Lower leg skin (tissue), 4 donors: ENCODE measurements at regions of chr12 and their contacts with region 1.

Region 1: DNA sequence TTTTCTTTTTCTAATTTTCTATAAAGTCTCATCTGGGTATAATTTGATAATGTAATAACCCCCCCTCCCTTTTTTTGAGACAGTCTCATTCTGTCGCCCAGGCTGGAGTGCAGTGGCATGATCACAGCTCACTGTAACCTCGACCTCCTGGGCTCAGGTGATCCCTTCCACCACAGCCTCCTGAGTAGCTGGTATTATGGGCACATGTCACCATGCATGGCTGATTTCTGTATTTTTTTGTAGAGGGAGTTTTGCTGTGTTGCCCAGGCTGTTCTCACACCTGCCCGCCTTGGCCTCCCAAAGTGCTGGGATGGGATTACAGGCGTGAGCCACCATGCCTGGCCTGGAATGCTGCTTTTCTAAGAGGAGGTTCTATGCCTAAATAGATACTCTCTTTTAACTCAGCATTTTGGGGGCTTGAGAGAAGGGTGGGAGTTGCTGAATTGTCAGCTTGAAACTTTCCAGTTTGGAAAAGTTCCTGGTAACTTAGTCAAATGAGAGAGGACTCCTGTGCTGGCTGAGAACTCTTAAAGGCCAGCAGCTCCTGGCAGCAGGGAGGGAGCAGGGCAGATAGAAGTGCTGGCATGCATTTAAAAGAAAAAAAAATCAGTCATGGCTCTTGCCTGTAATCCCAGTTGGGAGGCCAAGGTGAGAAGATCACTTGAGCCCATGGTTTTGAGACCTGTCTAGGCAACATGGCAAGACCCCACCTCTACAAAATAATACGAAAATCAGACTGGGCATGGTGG is 13.0 kb downstream of the NUDT4 start:
- DNase-seq: no peak
- H3K4me3 ChIP-seq: no peak overlapping the region
- CTCF ChIP-seq: no peak
- POLR2A ChIP-seq: no peak

Region 2: GRCh38 chr12:92796650-92797049 is 594.1 kb before region 1 on chr12:
- intact Hi-C with region 1: loop called (anchors 10 kb)
- DNase-seq: no peak
- H3K4me3 ChIP-seq: no peak overlapping the region
- CTCF ChIP-seq: no peak
- POLR2A ChIP-seq: no peak

Region 3: DNA sequence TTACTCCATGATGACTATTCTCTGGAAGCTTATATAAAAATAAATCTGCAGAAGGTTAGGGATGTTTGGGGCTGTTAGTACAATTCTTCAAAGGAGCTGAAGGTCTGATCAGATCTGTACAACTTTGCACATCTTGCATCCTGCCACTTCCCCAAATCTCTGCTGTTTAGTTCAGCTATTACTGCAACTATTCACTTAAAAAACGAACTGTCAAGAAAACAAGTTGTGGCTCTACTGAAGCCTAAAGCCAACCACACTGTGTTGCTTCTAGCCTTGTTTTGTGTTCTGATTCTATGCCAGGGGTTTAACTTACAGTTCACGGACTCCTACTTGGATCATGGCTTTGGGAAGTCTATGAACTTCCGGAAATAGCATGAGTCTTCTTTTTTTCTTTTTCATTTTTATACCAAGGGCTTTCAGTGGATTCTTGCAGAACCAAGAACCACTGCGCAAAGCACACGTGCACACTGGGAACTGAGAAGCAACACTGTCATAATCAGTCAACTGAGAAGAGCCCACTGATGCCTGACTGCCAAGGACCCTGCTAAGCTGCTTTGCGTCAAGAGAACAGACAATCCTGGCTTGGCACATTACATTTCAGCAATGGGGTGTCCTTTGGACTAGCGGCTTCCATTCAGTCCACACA is 395.3 kb before region 1 on chr12:
- intact Hi-C with region 1: loop called (anchors 10 kb)
- DNase-seq: no peak
- H3K4me3 ChIP-seq: no peak overlapping the region
- CTCF ChIP-seq: no peak
- POLR2A ChIP-seq: no peak